ENCODE measurements at regions of chr6 and their contacts with region 1.

Region 1: DNA sequence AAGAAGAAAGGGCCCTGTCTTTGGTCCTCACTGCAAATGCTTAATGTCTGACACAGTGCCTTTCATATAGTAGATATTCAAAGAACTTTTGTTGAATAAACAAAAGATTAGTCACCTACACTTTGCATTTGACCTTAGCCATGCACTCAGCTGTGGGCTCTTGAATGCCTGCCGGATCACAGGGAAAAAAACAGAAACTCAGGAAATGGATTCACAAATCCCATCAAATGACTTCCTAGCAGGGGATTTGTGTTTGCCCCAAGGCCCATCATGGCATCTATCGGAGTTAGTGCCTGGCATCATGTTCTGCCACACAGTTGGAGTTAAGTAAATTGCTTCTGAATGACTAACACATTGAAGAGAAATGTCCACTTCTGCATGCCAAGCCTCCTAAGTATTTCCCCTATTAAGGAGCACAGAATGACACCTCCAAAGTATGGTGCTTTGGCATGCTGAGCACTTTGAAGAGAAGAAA is 72.3 kb upstream of the DST start:
- DNase-seq: no peak
- ATAC-seq: peak in 5 of 8 donors; percentile 15 to 47 (median 36)
- H3K4me3 ChIP-seq: no peak overlapping the region
- H3K27ac ChIP-seq: peak overlapping the region in 9 of 10 donors; percentile 8 to 72 (median 52)
- H3K4me1 ChIP-seq: peaks cover 3 to 53% (median 37%) of the 10 kb centered on the region in 9 donors
- H3K27me3 ChIP-seq: no peaks in the 10 kb centered on the region
- CTCF ChIP-seq: no peak

Region 2: DNA sequence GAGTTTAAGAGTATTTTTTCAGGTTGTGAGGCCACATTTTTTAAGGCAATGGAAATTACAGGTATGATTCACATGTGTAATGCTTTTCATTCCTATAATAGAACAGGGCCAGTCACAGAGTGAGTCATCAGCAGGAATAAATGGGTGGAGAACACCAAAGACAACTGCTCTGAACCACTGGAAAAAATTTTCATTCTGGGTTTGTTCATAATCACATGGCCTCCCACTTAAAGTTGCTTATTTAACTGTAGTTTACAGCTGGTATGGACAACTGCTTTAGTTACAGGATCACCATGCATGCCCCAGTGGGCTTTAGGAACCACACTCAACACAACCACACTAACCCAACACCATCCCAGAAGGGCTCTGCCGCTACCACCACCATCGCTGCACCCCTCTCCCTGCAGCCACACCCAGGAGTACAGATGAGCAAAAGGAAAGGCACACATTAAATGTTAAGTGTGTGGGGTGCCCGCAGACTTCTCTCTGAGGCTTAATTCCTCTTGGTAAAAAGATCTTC is 34.7 kb after region 1 on chr6:
- intact Hi-C with region 1: loop called in 1 of 10 experiments (anchors 5 kb)
- DNase-seq: no peak
- ATAC-seq: peak in 6 of 8 donors; percentile 16 to 65 (median 50)
- H3K4me3 ChIP-seq: no peak overlapping the region
- H3K27ac ChIP-seq: no peak overlapping the region
- H3K4me1 ChIP-seq: peaks cover 0 to 76% (median 34%) of the 10 kb centered on the region in 9 donors
- H3K27me3 ChIP-seq: no peaks in the 10 kb centered on the region
- CTCF ChIP-seq: no peak

Region 3: DNA sequence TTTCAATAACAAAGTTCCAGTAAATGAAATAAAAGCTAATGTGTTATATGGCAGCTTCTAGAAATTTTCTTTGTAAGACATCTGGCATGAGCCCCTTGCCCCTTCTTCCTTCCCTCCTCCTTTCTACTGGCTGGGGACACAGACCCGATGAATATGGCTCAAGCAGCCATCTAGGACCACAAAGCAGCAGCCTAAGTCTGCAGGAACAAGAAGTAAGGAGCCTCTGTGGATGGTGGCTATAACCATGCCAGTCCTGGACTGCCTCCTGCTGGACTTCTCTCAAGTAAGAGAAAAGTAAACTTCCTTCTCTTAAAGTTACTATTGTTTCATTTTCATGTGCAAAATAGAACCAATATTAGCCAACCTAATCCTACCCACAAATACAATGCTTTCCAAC is 42.6 kb after region 1 on chr6:
- intact Hi-C with region 1: loop called in 5 of 10 experiments (anchors 5 kb)
- DNase-seq: no peak
- ATAC-seq: peak in 7 of 8 donors; percentile 22 to 65 (median 58)
- H3K4me3 ChIP-seq: no peak overlapping the region
- H3K27ac ChIP-seq: peak overlapping the region in 1 of 10 donors; percentile 52
- H3K4me1 ChIP-seq: peaks cover 3 to 68% (median 59%) of the 10 kb centered on the region in 9 donors
- H3K27me3 ChIP-seq: no peaks in the 10 kb centered on the region
- CTCF ChIP-seq: peak in 6 of 9 donors; percentile 29 to 55 (median 44)

Region 4: GRCh38 chr6:57135885-57136284 is 420.9 kb after region 1 on chr6:
- intact Hi-C with region 1: no loop called
- DNase-seq: no peak
- ATAC-seq: no peak
- H3K4me3 ChIP-seq: no peak overlapping the region
- H3K27ac ChIP-seq: no peak overlapping the region
- H3K4me1 ChIP-seq: peaks cover 0 to 12% (median 8%) of the 10 kb centered on the region in 9 donors
- H3K27me3 ChIP-seq: no peaks in the 10 kb centered on the region
- CTCF ChIP-seq: no peak